Left cardiac atrium (tissue), 4 donors: ENCODE measurements at regions of chr6 and their contacts with region 1.

Region 1: DNA sequence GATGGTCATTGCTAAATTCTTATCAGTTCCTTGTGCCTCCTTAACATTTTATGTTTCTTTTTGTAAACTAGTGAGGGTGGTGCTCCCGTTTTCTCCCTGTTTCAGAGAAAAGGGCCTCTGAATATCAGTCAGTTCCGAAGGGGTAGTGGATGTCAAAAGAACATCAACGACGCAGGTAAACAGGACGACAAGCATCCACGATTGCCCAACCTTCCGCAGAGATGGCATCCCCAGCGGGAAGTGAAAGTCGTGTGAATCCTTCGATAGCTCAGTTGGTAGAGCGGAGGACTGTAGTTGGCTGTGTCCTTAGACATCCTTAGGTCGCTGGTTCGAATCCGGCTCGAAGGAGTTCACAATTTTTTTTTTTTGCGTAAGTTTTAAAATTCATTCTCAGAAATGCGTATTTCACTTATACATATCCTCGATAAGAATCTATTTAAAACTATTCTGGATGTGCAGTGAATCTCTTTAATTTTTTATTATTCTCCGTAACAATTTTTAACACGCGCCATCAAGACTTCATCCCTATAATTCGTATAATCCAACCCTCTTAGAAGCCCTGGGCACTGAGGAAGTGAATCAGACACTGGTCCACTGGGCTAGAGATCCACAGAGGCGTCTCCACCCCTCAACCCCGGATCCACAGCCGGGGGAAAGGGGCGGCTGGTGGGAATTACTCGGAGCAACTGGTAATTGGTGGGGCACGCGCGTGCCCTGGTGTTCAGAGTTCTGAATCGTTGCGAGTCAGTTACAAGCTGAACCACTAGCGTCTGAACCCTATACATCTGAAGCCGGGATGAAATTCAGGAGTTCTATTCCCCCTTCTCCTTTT is 27.9 kb upstream of the ABT1 start:
- DNase-seq: peak; percentile 82
- ATAC-seq: peak; percentile 83 to 89

Region 2: GRCh38 chr6:26596579-26597388 is 28.0 kb after region 1 on chr6 and contains the start of gene ABT1:
- intact Hi-C with region 1: loop called in 1 of 2 experiments (anchors 1 kb)
- DNase-seq: peak; percentile 98
- ATAC-seq: peak; percentile 98
- total RNA-seq, gene ABT1: 8.2 to 10.7 TPM